ENCODE measurements at regions of chr9 and their contacts with region 1.

Region 1: DNA sequence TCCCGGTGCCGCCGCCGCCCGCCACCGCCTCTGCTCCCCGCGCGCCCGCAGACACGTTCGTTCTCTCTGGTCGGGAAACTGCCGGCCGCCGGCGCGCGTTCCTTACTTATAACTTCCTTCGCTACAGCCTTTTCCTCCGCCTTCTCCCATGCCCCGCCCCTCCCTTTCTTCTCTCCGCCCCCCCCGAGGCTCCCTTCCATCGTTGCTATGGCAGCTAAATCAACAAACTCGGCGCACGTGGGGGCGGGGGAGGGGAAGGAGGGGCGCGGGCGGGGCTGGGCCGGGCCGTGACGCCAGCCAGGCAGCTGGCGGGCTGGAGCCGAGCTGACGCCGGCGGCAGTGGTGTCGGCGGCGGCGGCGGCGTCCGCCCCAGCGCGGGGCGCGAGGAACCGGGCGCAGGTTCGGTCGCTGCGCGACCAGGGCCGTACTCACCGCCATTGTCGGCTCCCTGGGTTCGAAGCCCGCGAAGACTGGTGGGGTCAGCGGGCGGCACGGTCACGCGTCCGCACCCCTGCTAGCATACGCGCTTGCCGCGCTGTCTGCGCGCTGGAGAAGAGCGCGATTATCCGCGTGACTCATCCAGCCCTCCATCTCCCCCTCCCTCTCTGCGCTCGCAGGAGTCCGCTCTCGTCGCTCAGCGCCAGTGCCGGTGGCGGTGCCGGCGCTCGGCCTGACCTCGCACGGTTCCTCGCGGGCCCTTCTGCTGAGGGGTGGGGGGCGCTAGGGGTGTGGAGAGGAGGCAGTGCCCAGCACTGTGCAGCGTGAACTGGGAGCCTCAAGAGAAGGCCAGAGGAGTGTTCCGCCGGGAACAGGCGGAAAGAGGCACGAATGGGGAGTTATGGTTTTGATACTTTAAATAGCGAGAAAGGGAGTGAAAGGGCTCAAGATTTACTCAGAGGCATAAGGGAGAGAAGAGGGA is at the start of gene KLF4:
- DNase-seq: peak; percentile 94
- ATAC-seq: peak; percentile 87
- H3K4me3 ChIP-seq: peak within 1 kb of the TSS; percentile 77
- H3K27ac ChIP-seq: peak within 1 kb of the TSS; percentile 94
- H3K4me1 ChIP-seq: peaks cover 18% of the 10 kb centered on the region
- H3K27me3 ChIP-seq: peaks cover 3% of the 10 kb centered on the region
- CTCF ChIP-seq: no peak
- total RNA-seq, gene KLF4: 143 TPM

Region 2: GRCh38 chr9:107576962-107577776 is 87.2 kb after region 1 on chr9:
- intact Hi-C with region 1: loop called (anchors 5 kb)
- DNase-seq: no peak
- ATAC-seq: no peak
- H3K4me3 ChIP-seq: no peak overlapping the region
- H3K27ac ChIP-seq: no peak overlapping the region
- H3K4me1 ChIP-seq: no peaks in the 10 kb centered on the region
- H3K27me3 ChIP-seq: no peaks in the 10 kb centered on the region
- CTCF ChIP-seq: no peak